Calu3 (cell line): ENCODE measurements at regions of chr10 and their contacts with region 1.

Region 1: GRCh38 chr10:128011175-128011979 is 104.5 kb downstream of the PTPRE start:
- DNase-seq: peak; percentile 83
- H3K4me3 Mint-ChIP-seq: peak overlapping the region; percentile 39
- H3K27ac Mint-ChIP-seq: no peak overlapping the region
- H3K4me1 Mint-ChIP-seq: peaks cover 21% of the 10 kb centered on the region
- H3K27me3 Mint-ChIP-seq: no peaks in the 10 kb centered on the region
- CTCF ChIP-seq: peak; percentile 84

Region 2: DNA sequence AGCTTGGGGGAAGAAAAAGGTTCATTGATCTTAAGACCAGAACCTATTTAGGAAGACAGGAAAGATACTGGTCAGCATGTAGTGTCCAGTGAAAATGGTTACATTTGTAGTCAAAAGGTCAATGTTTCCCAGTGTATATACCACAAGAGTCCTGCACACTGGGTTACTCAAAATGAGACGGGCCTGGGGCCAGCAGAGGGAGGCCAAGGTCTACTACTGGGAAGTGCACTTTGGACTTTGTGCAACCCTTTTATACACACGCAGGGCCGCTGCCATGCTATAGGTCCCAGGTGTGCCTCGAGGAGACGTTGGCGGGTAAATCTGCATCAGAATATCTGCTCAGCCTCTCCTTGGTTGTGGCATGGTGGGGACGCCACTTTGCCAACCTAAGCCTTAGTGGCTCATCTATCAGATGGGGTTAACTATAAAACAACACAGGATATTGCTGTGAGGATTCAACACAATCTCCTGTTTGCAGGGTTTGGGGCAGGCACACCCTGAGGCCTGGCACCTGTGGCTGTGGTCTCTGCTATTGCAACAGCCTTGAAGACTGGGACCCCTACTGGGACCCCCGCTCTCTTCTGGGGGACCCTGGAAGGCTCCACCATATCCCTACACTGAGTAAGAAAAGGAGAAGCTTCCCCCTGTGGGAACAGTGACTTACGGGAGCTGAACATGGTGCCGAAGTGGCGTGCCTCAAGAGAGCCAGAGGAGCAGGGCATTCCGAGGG is 138.3 kb before region 1 on chr10:
- CTCF ChIA-PET with region 1: no interaction called
- intact Hi-C with region 1: loop called (anchors 1 kb)
- DNase-seq: peak; percentile 50
- H3K4me3 Mint-ChIP-seq: no peak overlapping the region
- H3K27ac Mint-ChIP-seq: no peak overlapping the region
- H3K4me1 Mint-ChIP-seq: peaks cover 8% of the 10 kb centered on the region
- H3K27me3 Mint-ChIP-seq: peaks cover 39% of the 10 kb centered on the region
- CTCF ChIP-seq: peak; percentile 39

Region 3: DNA sequence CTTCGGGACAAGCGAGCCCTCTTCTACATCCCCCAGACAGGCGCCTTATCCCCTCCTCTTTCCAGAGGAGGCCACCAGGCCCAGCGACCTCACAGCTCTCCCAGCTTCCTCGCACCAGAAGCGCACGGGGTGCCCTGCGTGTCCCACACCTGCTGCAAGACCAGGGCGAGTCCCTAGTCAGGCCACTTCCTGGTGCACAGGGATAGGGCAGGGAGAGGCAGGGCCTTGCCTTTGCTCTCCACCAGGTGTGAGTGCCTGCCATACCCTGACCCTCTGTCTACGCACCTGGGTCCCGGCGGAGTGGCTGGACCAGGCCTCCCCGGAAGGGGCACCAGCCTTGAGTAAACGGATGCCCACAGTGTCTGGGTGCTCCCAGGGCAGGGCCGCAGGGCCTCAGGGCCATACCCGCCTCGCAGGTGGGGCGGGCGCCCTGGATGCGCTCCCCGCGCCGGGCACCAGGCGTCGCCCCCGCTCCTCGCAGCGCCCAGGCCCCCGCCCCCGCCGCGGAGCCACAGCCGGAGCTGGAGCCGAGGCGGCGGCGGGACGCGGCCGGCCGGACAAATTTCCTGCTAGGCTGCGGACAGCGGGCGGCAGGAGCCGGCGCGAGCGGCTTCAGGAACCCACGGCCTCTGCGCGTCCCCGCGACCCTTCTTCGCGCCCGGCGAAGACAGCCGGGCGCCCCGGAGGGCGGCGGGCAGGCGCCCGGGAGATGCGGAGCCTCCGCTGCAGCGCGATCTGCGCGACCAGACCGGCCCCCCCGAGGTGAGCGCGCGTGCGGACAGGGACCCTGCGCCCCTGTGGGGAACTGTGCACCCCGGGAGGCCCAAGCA is 104.6 kb before region 1 on chr10 and contains the start of gene PTPRE:
- CTCF ChIA-PET with region 1: interaction called, 30 read pairs
- intact Hi-C with region 1: loop called (anchors 1 kb)
- DNase-seq: peak; percentile 86
- H3K4me3 Mint-ChIP-seq: peak within 1 kb of the TSS; percentile 53
- H3K27ac Mint-ChIP-seq: peak within 1 kb of the TSS; percentile 9
- H3K4me1 Mint-ChIP-seq: peaks cover 34% of the 10 kb centered on the region
- H3K27me3 Mint-ChIP-seq: no peaks in the 10 kb centered on the region
- CTCF ChIP-seq: peak; percentile 67
- total RNA-seq, gene PTPRE: 5.9 and 7.6 TPM in 2 replicates

Region 4: DNA sequence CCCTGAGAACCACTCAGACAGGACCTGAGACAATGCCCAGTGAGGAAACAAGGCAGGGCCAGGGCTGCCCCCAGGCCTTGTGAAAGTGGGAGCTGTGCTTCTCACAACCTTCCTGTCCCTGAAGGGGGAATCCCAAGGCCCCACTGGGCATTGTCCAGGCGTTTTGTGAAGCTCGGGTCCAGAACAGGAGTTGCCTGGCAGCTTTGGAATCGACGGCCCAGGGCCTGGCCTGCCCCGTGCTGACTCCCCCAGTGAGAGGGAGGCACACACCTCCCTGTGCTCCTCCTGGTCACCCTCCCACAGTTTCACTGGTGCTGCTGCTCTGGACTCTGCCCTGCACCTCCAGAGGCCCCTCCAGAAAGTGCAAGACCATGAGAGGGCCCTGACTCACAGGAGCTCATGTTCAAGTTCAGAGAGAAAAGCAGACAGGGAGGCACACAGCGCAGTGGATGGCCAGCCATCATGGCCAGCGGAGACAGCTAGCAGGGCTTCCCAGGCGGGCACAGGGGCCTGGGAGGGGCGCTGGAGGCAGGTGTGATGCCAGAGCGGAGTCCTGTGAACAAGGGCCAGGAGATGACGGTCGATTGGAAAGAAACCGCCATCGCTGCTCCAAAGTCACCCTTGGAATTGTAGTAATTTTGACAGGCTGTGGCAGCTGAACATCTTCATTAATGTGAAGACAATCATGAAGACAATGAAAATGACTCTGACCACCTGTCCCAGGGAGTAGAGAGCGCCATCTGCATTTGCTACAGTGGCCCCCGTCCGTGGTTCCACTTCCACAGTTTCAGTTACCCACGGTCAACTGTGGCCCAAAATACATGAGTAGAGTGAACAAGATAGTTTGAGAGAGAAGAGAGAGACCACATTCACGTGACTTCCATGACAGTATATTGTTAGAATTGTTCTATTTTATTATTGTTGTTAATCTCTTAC is 11.2 kb after region 1 on chr10:
- CTCF ChIA-PET with region 1: no interaction called
- intact Hi-C with region 1: no loop called
- DNase-seq: no peak
- H3K4me3 Mint-ChIP-seq: no peak overlapping the region
- H3K27ac Mint-ChIP-seq: no peak overlapping the region
- H3K4me1 Mint-ChIP-seq: no peaks in the 10 kb centered on the region
- H3K27me3 Mint-ChIP-seq: no peaks in the 10 kb centered on the region
- CTCF ChIP-seq: no peak

Region 5: DNA sequence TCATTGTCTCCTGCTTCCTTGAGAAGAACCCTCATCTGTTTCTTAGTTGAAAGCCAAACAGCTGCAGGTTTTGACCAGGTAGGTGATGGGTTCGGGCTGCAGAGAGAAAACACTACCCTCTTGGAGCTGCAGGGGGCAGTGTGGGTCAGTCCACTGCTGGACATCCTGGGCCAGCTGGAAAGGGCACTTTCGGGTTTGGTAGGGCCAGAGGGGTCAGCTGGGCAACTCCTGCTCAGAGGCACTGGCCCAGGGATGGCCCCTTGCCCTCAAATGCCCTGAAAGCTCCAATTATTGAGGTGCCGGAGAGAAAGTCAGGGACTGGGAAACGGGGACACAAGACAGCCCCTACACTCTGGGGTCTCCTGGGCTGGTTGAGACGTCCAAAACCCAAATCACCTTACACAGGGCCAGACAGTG is 24.2 kb after region 1 on chr10:
- CTCF ChIA-PET with region 1: no interaction called
- intact Hi-C with region 1: no loop called
- DNase-seq: peak; percentile 54
- H3K4me3 Mint-ChIP-seq: no peak overlapping the region
- H3K27ac Mint-ChIP-seq: no peak overlapping the region
- H3K4me1 Mint-ChIP-seq: peaks cover 16% of the 10 kb centered on the region
- H3K27me3 Mint-ChIP-seq: no peaks in the 10 kb centered on the region
- CTCF ChIP-seq: peak; percentile 45